ENCODE measurements at regions of chr21 and their contacts with region 1.

Region 1: GRCh38 chr21:18041012-18041411 is 203.6 kb upstream of the CHODL start:
- DNase-seq: no peak
- H3K4me3 ChIP-seq: no peak overlapping the region
- H3K4me3 Mint-ChIP-seq: no peak overlapping the region
- H3K27ac ChIP-seq: no peak overlapping the region
- H3K27ac Mint-ChIP-seq: no peak overlapping the region
- H3K4me1 ChIP-seq: no peaks in the 10 kb centered on the region
- H3K4me1 Mint-ChIP-seq: no peaks in the 10 kb centered on the region
- H3K27me3 ChIP-seq: no peaks in the 10 kb centered on the region
- H3K27me3 Mint-ChIP-seq: no peaks in the 10 kb centered on the region

Region 2: GRCh38 chr21:18204931-18205330 is 163.9 kb after region 1 on chr21:
- CTCF ChIA-PET with region 1: interaction called, 11 read pairs
- POLR2A ChIA-PET with region 1: no interaction called
- DNase-seq: no peak
- H3K4me3 ChIP-seq: no peak overlapping the region
- H3K4me3 Mint-ChIP-seq: no peak overlapping the region
- H3K27ac ChIP-seq: no peak overlapping the region
- H3K27ac Mint-ChIP-seq: no peak overlapping the region
- H3K4me1 ChIP-seq: no peaks in the 10 kb centered on the region
- H3K4me1 Mint-ChIP-seq: no peaks in the 10 kb centered on the region
- H3K27me3 ChIP-seq: no peaks in the 10 kb centered on the region
- H3K27me3 Mint-ChIP-seq: no peaks in the 10 kb centered on the region

Measured in CD8-positive, alpha-beta memory T cell (primary cell).